Ovary (tissue), 10 donors: ENCODE measurements at regions of chr10 and their contacts with region 1.

Region 1: DNA sequence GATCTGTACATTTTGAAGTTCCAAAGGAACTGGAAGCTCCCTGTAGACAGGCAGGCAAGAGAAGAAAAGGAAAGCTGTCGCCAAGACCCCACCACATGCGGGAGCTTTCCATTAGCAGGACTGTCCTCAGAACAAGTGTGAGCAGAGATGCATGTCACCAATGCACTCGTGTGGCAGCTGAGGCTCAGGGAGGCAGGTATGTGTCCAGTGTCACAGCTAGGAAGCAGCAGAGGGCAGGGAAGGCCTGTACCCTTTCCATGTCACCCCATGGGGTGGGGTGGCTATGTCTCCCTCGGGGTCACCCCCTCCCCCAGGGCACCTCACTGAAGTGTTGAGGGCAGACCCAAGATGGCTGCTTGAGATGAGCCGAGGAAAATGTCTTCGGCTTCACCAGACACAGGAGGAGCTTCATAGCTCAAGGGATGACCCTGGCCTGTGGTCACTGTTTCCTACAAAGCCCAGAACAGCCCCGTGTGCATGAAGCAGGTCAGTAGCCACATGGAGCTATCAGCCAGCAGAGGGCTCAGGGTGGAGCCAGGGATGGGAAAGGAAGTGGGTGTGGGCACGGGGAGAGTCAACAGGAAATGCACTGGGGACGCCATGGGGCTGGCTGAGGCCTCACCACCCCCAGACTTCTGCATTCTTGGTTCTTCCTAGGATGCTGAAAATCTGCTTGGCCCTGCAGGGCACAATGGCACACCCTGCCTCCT is 96.6 kb downstream of the FAM53B start:
- DNase-seq: no peak
- H3K4me3 ChIP-seq: no peak overlapping the region
- H3K27ac ChIP-seq: peak overlapping the region; percentile 54 to 86
- H3K4me1 ChIP-seq: peaks cover 42% of the 10 kb centered on the region
- H3K27me3 ChIP-seq: no peaks in the 10 kb centered on the region
- CTCF ChIP-seq: no peak
- EP300 ChIP-seq: no peak
- POLR2A ChIP-seq: no peak

Region 2: DNA sequence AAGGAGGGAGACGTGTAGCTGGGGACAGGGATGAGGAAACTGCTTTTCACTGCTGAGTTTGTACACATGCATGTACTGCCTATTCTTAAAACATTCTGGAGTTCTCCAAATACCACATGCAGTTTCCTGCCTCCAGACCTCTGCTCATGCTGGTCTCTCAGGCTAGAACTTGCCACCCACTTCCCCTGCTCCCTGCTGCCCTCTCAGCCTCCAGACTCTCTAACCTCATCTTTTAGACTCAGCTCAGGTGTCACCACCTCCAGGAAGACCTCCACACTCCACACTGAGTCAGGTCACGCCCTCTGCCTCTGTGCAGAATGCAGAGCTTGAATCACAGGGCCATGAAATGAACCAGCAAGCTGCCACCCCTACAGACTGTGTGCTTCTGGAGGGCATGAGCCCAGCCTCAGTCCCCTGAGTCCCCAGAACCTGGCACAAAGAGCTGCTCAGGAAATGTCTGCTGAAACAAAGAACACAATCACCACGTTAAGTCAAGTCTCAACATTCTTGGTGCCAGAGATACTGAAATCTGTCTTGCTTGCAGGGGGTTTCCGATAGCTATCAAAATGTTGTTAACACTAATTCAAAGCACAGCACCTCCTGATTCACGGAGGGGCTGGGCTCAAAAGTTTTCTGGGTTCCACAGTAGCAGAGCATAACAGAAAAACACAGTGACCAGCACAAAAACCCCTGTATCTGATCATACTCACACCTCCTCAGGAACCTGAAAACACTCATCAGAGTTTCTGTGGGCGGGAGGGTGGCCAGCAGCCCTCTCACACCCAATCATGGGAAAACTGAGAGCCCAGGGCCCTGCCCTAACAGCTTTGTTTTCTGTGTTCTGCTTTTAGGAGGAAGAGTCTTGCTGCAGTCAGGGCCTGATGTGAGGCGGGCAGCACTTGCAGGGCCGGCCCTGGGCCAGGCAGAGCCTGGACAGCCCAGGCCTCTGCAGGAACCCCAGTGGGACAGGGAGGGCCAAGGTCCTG is 75.5 kb after region 1 on chr10:
- intact Hi-C with region 1: loop called in 1 of 4 experiments (anchors 10 kb)
- DNase-seq: peak in 1 of 5 donors; percentile 61
- H3K4me3 ChIP-seq: no peak overlapping the region
- H3K27ac ChIP-seq: peak overlapping the region; percentile 57
- H3K4me1 ChIP-seq: peaks cover 49% of the 10 kb centered on the region
- H3K27me3 ChIP-seq: no peaks in the 10 kb centered on the region
- CTCF ChIP-seq: no peak
- EP300 ChIP-seq: no peak
- POLR2A ChIP-seq: no peak